CD4-positive, alpha-beta T cell (primary cell): ENCODE measurements at regions of chr1 and their contacts with region 1.

Region 1: GRCh38 chr1:22812092-22812880 is 101.6 kb downstream of the EPHB2 start:
- DNase-seq: no peak
- ATAC-seq: no peak
- H3K4me3 ChIP-seq: no peak overlapping the region
- H3K4me3 Mint-ChIP-seq: no peak overlapping the region
- H3K27ac ChIP-seq: no peak overlapping the region
- H3K27ac Mint-ChIP-seq: no peak overlapping the region
- H3K4me1 ChIP-seq: no peaks in the 10 kb centered on the region
- H3K4me1 Mint-ChIP-seq: no peaks in the 10 kb centered on the region
- H3K27me3 ChIP-seq: no peaks in the 10 kb centered on the region
- H3K27me3 Mint-ChIP-seq: peaks cover 3% of the 10 kb centered on the region
- CTCF ChIP-seq: no peak

Region 2: GRCh38 chr1:22831729-22832413 is 19.6 kb after region 1 on chr1:
- CTCF ChIA-PET with region 1: no interaction called
- POLR2A ChIA-PET with region 1: no interaction called
- intact Hi-C with region 1: loop called in 1 of 2 experiments (anchors 2 kb)
- DNase-seq: peak in 2 of 14 experiments; percentile 36 to 60
- ATAC-seq: no peak
- H3K4me3 ChIP-seq: no peak overlapping the region
- H3K4me3 Mint-ChIP-seq: no peak overlapping the region
- H3K27ac ChIP-seq: no peak overlapping the region
- H3K27ac Mint-ChIP-seq: no peak overlapping the region
- H3K4me1 ChIP-seq: no peaks in the 10 kb centered on the region
- H3K4me1 Mint-ChIP-seq: no peaks in the 10 kb centered on the region
- H3K27me3 ChIP-seq: peaks cover 0 to 7% of the 10 kb centered on the region in 2 experiments
- H3K27me3 Mint-ChIP-seq: peaks cover 27% of the 10 kb centered on the region
- CTCF ChIP-seq: no peak